Transverse colon (tissue), 4 donors: ENCODE measurements at regions of chr21 and their contacts with region 1.

Region 1: DNA sequence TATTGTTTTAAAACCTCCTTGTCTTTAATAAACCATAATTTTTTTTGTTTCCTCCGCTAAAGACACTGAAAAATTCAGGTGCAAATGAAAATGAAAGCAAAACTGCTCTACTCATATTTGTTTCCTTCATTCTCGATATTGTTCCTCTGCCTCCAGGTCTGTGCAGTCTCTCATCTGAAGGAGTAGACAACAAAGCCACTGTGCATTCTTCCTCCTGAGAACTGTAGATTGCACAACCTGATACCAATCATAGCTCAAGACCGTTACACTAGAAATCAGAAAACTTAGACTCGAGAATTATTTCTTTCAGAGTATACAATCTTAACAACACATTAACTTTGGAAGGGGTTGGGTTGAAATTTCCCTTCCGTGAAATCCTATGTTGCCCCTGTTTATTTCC is 373.1 kb upstream of the CXADR start:
- DNase-seq: no peak
- H3K4me3 ChIP-seq: peak overlapping the region in 3 of 4 donors; percentile 31 to 46 (median 40)
- H3K27ac ChIP-seq: no peak overlapping the region
- H3K4me1 ChIP-seq: peaks cover 0 to 3% (median 0%) of the 10 kb centered on the region in 4 donors
- H3K27me3 ChIP-seq: no peaks in the 10 kb centered on the region
- CTCF ChIP-seq: no peak
- EP300 ChIP-seq: no peak
- POLR2A ChIP-seq: no peak

Region 2: DNA sequence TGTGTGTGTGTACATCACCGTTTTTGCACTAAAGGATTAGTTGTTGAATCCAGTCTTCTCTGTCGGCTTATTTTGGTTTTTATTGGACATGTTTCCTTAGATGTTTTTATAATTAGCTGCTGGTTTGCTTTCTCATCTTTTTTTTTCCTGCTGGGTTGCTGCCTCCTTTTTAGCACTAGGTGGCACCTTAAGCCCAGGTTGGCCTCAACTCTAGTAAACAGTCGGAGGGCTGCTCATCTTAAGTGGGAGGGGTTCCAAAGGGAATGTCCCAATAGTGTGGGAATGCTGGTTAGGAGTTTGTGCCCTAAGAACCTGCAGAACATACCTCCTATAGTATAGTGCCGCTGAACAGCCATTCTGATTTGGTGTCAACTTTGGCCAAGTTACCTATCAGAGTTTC is 197.0 kb before region 1 on chr21:
- in situ Hi-C with region 1: loop called in 1 of 4 experiments (anchors 25 kb)
- intact Hi-C with region 1: no loop called
- DNase-seq: no peak
- H3K4me3 ChIP-seq: no peak overlapping the region
- H3K27ac ChIP-seq: no peak overlapping the region
- H3K4me1 ChIP-seq: no peaks in the 10 kb centered on the region
- H3K27me3 ChIP-seq: no peaks in the 10 kb centered on the region
- CTCF ChIP-seq: peak in 4 of 5 experiments; percentile 13 to 24 (median 20)
- EP300 ChIP-seq: no peak
- POLR2A ChIP-seq: no peak

Region 3: DNA sequence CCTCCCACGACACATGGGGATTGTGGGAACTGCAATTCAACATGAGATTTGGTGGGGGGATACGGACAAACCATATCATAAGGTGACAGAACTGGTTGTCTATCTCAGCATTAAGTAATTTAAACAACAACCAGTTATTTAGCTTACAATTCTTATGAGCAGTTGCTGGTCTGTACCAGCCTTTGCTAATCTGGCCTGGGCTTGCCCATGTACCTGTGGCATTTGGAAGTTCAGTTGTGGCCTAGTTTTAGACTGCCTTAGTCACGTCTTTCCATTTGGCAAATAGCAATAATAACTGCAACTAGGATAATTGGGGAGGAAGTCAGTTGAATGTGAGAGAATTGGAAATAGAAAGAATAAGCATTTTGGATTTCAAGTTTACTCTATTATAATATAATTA is 68.6 kb before region 1 on chr21:
- in situ Hi-C with region 1: no loop called
- intact Hi-C with region 1: no loop called
- DNase-seq: no peak
- H3K4me3 ChIP-seq: no peak overlapping the region
- H3K27ac ChIP-seq: no peak overlapping the region
- H3K4me1 ChIP-seq: no peaks in the 10 kb centered on the region
- H3K27me3 ChIP-seq: no peaks in the 10 kb centered on the region
- CTCF ChIP-seq: no peak
- EP300 ChIP-seq: no peak
- POLR2A ChIP-seq: no peak